ENCODE measurements at regions of chr1 and their contacts with region 1.

Region 1: DNA sequence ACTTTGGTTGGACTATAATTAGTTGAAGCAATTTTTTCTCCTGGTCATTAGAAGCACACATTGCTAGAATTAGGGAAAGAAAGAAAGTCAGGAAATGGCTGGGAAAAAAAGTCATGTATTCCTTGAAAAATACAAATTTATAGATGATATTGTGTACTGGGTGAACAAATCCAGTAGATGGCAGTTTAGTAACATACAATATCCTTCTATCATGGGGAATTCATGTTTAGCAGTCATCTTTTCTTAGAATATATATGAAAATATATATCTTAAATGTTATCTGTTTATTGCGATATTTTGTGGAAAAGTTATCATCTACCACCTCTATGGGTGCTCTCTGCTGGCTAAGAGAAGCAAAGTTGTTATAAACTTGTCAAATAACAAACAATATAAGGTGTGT is 13.1 kb upstream of the ZRANB2 start:
- DNase-seq: no peak
- ATAC-seq: no peak
- H3K4me3 Mint-ChIP-seq: no peak overlapping the region
- H3K27ac Mint-ChIP-seq: no peak overlapping the region
- H3K4me1 Mint-ChIP-seq: no peaks in the 10 kb centered on the region
- H3K27me3 Mint-ChIP-seq: peaks cover 8% of the 10 kb centered on the region

Region 2: DNA sequence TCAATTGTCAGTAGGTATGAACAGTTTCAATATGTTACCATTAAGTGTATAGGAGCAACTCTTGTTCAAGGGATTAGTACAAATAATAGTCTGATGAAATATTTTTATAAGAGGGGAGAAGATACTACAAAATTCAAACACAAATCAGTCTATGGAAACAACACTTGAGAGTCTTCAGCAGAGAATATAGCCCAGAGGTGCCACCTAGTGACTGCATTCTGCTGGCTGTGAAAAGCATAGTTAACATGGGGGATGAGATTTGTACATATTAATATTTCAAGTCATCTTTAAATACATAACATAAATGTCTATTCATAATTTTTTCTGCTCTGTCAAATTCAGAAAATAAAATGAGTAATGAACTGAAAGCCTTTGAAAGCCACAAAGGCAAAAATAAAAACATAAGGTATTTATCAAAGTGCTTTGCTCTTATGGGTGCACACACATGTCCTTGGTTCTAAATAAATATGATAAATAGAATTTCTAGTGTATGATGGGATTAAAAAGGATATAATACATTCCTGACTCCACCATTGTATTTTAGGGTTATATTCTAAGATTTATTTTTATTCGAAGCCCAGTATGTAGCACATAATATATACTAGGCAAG is 427.8 kb after region 1 on chr1:
- CTCF ChIA-PET with region 1: no interaction called
- POLR2A ChIA-PET with region 1: no interaction called
- intact Hi-C with region 1: loop called in 1 of 2 experiments (anchors 2 kb)
- DNase-seq: peak; percentile 35
- ATAC-seq: no peak
- H3K4me3 Mint-ChIP-seq: no peak overlapping the region
- H3K27ac Mint-ChIP-seq: no peak overlapping the region
- H3K4me1 Mint-ChIP-seq: no peaks in the 10 kb centered on the region
- H3K27me3 Mint-ChIP-seq: no peaks in the 10 kb centered on the region

Region 3: DNA sequence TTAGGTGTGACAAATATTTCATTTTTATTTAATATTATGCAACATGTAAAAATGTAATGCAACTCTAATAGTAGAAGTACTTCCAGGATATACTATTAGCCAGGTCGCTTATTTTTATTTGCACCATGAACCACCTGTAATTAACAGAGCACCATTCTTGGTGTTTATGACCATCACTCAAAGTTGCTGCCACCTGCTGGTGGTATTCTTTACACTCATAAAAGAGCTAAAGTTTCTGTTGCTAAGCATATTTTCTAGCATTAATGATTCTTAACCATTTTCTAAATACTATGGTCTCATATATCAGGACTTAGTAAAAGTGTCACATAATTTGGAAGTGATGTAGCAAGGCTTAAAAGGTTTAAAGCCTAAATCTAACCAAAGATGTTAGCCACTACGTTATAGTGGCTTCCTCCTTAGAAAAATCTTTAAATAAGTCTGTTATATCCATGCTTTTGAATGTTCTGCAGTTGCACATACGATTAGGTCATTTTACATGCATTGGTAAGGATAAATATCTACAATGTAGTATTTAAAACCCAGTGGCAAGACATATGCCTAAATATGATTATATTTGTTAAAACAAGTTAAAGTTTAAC is 943.9 kb after region 1 on chr1:
- CTCF ChIA-PET with region 1: no interaction called
- POLR2A ChIA-PET with region 1: no interaction called
- intact Hi-C with region 1: loop called in 1 of 2 experiments (anchors 5 kb)
- DNase-seq: peak; percentile 38
- ATAC-seq: no peak
- H3K4me3 Mint-ChIP-seq: no peak overlapping the region
- H3K27ac Mint-ChIP-seq: no peak overlapping the region
- H3K4me1 Mint-ChIP-seq: no peaks in the 10 kb centered on the region
- H3K27me3 Mint-ChIP-seq: no peaks in the 10 kb centered on the region